Activated CD4-positive, alpha-beta T cell treated with anti-CD3 and anti-CD28 coated beads, Interleukin-2, amount 10 ng/mL, durations not matched to agents 24 days and 14 days (primary cell): ENCODE measurements at regions of chr14 and their contacts with region 1.

Region 1: GRCh38 chr14:49867831-49868723 is 15.5 kb upstream of the NEMF start:
- DNase-seq: peak; percentile 98
- H3K4me3 Mint-ChIP-seq: peak overlapping the region; percentile 99
- H3K27ac Mint-ChIP-seq: peak overlapping the region; percentile 97
- H3K4me1 Mint-ChIP-seq: peaks cover 23% of the 10 kb centered on the region
- H3K27me3 Mint-ChIP-seq: no peaks in the 10 kb centered on the region

Region 2: DNA sequence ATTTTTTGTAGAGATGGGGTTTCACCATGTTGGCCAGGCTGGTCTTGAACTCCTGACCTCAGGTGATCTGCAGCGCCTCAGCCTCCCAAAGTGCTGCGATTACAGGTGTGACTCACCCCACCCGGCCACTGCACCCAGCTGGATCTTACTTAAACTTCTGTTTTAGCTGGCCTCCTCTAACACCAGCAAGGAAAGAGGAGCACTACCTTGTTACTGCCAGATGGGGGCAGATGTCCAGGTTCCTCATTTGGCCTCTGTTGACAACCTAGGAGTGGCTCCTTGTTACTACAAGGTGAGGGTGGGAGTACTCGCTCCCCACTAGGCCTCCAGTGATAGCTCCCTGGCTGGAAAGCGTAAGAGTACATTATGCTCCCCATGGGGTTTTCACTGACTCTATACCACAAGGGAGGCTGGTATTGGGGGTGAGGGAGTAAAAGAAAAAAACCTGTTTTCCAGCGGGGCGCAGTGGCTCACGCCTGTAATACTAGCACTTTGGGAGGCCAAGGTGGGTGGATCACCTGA is 11.7 kb after region 1 on chr14:
- intact Hi-C with region 1: loop called (anchors 1 kb)
- DNase-seq: peak; percentile 87
- H3K4me3 Mint-ChIP-seq: no peak overlapping the region
- H3K27ac Mint-ChIP-seq: peak overlapping the region; percentile 66
- H3K4me1 Mint-ChIP-seq: peaks cover 25% of the 10 kb centered on the region
- H3K27me3 Mint-ChIP-seq: no peaks in the 10 kb centered on the region

Region 3: DNA sequence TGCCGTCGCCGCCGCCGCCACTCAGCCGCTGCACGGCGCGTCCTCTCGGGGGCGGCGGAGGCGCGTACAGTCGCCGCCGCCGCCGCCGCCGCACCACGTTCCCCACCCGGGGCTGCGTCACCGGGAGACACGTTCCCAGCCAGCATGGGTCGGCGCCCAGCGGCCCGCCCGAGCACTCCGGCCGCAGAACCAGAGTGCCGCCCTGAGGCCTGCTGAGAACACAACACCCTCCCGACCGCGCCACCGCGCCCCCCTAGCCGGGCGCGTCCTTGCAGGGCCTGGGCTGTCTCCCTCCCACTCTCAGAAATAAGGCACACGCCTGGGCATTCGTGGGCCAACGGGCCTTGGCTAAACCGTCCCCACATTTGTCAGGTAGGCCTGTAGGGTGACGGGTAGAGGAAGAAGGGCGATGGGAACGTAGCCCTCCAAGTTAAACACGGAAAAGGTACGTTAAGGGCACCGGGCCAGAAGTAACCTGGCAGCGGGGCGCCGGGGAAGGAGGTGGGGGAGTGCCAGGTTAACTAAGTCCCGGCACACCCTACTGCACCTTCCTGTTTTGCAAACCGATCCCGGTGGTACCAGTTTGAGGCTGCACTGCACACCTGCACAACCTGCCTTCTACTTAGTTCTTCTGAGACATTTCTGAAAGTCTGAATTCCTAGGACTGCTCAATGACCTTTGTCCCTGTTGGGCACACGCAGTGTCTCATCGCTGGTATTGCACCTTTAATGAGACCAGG is 664.6 kb after region 1 on chr14 and contains the start of gene MAP4K5:
- intact Hi-C with region 1: loop called (anchors 5 kb)
- DNase-seq: peak; percentile 96
- H3K4me3 Mint-ChIP-seq: peak within 1 kb of the TSS; percentile 89
- H3K27ac Mint-ChIP-seq: peak within 1 kb of the TSS; percentile 75
- H3K4me1 Mint-ChIP-seq: peaks cover 38% of the 10 kb centered on the region
- H3K27me3 Mint-ChIP-seq: peaks cover 17% of the 10 kb centered on the region
- total RNA-seq, gene MAP4K5: 24.3 and 24.6 TPM in 2 replicates

Region 4: GRCh38 chr14:50823051-50823761 is 955.1 kb after region 1 on chr14:
- intact Hi-C with region 1: loop called (anchors 10 kb)
- DNase-seq: no peak
- H3K4me3 Mint-ChIP-seq: peak overlapping the region; percentile 77
- H3K27ac Mint-ChIP-seq: peak overlapping the region; percentile 87
- H3K4me1 Mint-ChIP-seq: peaks cover 64% of the 10 kb centered on the region
- H3K27me3 Mint-ChIP-seq: no peaks in the 10 kb centered on the region